Head of caudate nucleus (tissue), 42 donors: ENCODE measurements at regions of chr17 and their contacts with region 1.

Region 1: GRCh38 chr17:63445979-63446691 is at the start of gene CYB561:
- DNase-seq: peak in 25 of 42 donors; percentile 48 to 78 (median 59)

Region 2: GRCh38 chr17:63478791-63479494 is 32.8 kb after region 1 on chr17:
- intact Hi-C with region 1: loop called (anchors 5 kb)
- DNase-seq: peak; percentile 38 to 88 (median 75)

Region 3: DNA sequence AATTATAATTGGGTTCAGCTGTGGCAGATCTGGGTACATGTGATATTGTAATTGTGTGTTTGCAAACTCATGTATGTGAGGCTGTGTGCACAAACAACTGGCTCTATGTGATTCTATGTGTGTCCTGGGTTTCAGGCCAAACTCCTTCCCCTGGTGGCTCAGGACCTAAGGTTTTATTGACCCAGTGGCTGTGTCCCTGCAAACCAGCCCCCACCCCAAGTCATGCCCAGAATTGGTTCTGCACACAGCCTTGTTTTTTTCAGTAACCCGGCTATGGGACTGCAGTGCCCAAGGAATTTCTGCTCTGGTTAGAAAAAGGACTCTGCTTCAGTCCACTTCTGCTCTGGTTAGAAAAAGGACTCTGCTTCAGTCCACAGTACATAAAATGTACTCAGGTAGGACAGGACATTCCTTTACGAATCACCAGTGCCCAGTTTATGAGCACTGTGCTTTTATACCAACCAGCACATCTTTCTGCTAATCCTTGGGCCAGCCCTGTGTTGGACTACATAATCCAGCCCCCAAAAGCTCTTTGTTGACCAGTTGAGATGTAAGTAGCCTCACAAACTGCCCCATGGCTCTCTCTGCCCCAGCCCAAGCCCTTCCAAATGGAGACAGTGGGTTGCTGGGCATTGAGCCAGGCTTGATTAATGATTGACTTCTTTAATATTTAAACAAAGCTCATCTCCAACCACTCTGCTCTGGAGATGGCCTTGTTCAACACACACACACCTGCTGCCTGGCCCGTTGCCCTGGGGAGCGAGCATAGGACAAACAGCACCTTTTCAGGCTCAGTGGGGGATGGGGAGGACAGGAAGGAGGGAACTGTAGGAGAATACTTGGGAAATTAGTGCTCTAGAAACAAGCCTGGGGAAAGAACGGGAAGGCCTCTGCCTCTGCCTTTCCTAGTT is 74.1 kb after region 1 on chr17:
- intact Hi-C with region 1: loop called (anchors 10 kb)
- DNase-seq: no peak